IMR-90 (cell line): ENCODE measurements at regions of chr16 and their contacts with region 1.

Region 1: GRCh38 chr16:75379911-75380847 is 53.1 kb downstream of the CFDP1 start:
- DNase-seq: no peak
- ATAC-seq: no peak
- H3K4me3 ChIP-seq: no peak overlapping the region
- H3K27ac ChIP-seq: peak overlapping the region; percentile 54; the same call in 1 of the 2 replicates
- H3K4me1 ChIP-seq: peaks cover 25% of the 10 kb centered on the region
- H3K27me3 ChIP-seq: no peaks in the 10 kb centered on the region
- CTCF ChIP-seq: no peak
- POLR2A ChIP-seq: no peak
- RAD21 ChIP-seq: no peak

Region 2: GRCh38 chr16:74626741-74627416 is 753.3 kb before region 1 on chr16:
- CTCF ChIA-PET with region 1: no interaction called
- POLR2A ChIA-PET with region 1: no interaction called
- dilution Hi-C with region 1: no loop called
- in situ Hi-C with region 1: no loop called
- intact Hi-C with region 1: no loop called
- DNase-seq: peak; percentile 60
- ATAC-seq: peak; percentile 67
- H3K4me3 ChIP-seq: no peak overlapping the region
- H3K27ac ChIP-seq: no peak overlapping the region
- H3K4me1 ChIP-seq: peaks cover 4% of the 10 kb centered on the region
- H3K27me3 ChIP-seq: no peaks in the 10 kb centered on the region
- CTCF ChIP-seq: no peak
- POLR2A ChIP-seq: no peak
- RAD21 ChIP-seq: no peak

Region 3: GRCh38 chr16:75251280-75252048 is 128.7 kb before region 1 on chr16 and contains the start of gene BCAR1:
- CTCF ChIA-PET with region 1: no interaction called
- POLR2A ChIA-PET with region 1: interaction called, 3 read pairs
- dilution Hi-C with region 1: no loop called
- in situ Hi-C with region 1: no loop called
- intact Hi-C with region 1: loop called (anchors 5 kb)
- DNase-seq: peak; percentile 93
- ATAC-seq: peak; percentile 68
- H3K4me3 ChIP-seq: peak within 1 kb of the TSS; percentile 70
- H3K27ac ChIP-seq: peak within 1 kb of the TSS; percentile 98
- H3K4me1 ChIP-seq: peaks cover 76% of the 10 kb centered on the region
- H3K27me3 ChIP-seq: no peaks in the 10 kb centered on the region
- CTCF ChIP-seq: no peak
- POLR2A ChIP-seq: peak; percentile 81
- RAD21 ChIP-seq: peak; percentile 15; the same call in 1 of the 2 replicates
- total RNA-seq, gene BCAR1: 17.8 and 18.1 TPM in 2 replicates

Region 4: DNA sequence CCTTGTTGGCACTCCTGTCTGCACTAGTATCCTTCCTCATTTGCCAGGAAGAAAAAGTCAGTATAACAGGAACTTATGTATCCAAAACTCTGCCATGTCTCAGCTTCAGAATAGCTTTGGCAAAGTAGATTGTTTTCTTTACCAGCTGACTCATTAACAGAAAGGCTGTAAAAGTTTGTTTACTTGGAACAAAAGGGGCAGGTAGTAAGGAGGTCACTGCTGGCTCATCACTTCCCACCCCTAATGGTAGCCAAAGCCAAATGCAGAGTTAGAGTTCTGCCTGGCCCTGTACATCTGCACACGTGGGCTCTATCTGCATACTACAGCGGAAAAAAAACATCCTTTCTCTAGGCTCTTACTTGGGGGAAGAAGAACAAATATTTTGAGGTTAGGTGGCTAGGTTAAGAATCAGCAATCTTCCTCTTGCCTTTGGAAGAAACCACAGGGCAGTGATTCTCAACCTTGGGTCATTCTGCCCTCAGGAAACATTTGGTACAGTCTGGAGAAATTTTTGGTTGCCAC is 37.8 kb before region 1 on chr16:
- CTCF ChIA-PET with region 1: no interaction called
- POLR2A ChIA-PET with region 1: no interaction called
- dilution Hi-C with region 1: no loop called
- in situ Hi-C with region 1: no loop called
- intact Hi-C with region 1: loop called (anchors 5 kb)
- DNase-seq: peak; percentile 65
- ATAC-seq: peak; percentile 63
- H3K4me3 ChIP-seq: no peak overlapping the region
- H3K27ac ChIP-seq: no peak overlapping the region
- H3K4me1 ChIP-seq: peaks cover 24% of the 10 kb centered on the region
- H3K27me3 ChIP-seq: no peaks in the 10 kb centered on the region
- CTCF ChIP-seq: no peak
- POLR2A ChIP-seq: no peak
- RAD21 ChIP-seq: no peak